Spleen (tissue), 13 donors: ENCODE measurements at regions of chr3 and their contacts with region 1.

Region 1: DNA sequence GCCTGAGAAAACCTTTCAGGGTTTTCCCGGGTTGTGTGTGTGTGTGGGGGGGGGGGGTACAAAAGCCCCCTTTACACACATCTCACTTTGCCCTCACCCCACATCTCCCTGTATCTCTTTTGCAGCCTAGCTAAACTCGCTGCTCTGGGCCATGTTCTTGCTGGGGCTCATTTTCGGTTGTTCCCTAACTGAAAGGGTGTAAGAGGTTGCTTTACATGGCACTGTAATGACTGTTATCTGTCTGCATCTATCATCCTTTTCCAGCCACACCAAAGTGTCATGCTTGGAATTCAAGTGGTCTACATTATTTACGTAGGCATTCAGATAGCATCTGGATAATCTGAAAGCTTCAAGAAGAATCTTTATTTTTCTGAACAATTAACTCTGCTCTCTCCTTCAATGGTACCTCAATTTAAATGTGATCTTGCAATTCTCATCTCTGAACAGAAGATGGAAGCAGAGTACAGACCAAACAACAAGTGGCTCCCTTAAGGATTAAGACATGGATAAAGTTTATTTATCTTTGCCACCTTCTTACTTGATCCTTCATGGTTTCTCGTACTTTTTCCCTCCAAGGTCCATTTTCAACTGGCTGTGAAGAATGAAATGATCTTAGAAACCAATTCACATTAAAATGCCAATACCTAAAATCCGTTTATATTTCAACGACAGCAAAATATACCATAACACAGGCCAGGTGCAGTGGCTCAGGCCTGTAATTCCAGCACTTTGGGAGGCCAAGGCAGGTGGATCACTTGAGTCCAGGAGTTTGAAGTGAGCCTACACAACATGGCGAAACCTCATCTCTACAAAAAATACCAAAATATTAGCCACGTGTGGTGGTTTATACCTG is 34.9 kb downstream of the DCLK3 start:
- DNase-seq: no peak
- H3K4me3 ChIP-seq: no peak overlapping the region
- H3K27ac ChIP-seq: no peak overlapping the region
- H3K4me1 ChIP-seq: peaks cover 0 to 4% (median 0%) of the 10 kb centered on the region in 6 donors
- H3K27me3 ChIP-seq: peaks cover 0 to 6% (median 0%) of the 10 kb centered on the region in 7 donors
- CTCF ChIP-seq: peak; percentile 16 to 70 (median 51)
- POLR2A ChIP-seq: no peak

Region 2: GRCh38 chr3:36868614-36869436 is 139.4 kb after region 1 on chr3:
- intact Hi-C with region 1: loop called (anchors 5 kb)
- DNase-seq: no peak
- H3K4me3 ChIP-seq: no peak overlapping the region
- H3K27ac ChIP-seq: no peak overlapping the region
- H3K4me1 ChIP-seq: peaks cover 0 to 29% (median 9%) of the 10 kb centered on the region in 6 donors
- H3K27me3 ChIP-seq: no peaks in the 10 kb centered on the region
- CTCF ChIP-seq: peak; percentile 20 to 85 (median 70)
- POLR2A ChIP-seq: no peak

Region 3: DNA sequence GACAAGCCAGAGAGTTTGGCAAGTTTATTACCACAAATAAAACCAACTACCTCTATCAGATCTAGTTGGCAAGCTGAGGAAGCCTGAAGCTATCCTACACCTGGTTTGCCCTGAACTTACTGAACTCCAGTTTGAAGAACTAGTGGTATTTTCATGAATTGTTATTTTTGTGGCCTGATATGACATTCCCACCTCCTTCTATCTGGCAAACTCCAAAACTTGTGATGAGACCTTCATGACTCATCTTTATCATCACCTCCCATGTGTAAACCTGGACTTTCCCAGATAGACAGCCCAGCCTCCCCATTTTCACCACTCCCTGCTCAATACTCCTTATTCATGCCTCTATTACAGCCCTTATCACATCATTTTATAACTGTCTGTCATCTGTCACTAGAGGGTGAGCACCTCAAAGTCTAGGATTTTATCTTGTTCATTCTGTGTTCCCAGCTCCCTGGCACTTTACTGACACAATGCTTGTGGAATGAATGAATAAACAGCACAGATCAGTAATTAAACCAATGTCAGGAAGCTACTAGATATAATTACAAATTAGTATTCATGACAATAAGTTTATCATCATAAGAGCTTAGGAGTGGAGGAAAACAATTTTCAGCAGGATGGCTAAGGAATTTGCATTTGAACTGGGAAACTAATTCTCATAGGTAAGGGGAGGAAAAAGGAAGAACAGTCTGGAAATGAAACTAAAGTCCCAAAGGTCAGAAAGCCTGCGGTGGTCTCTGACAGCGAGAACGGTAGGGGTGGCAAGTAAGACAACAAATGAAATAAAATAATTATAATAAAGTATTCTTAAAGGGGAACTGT is 228.6 kb after region 1 on chr3:
- intact Hi-C with region 1: loop called (anchors 5 kb)
- DNase-seq: no peak
- H3K4me3 ChIP-seq: no peak overlapping the region
- H3K27ac ChIP-seq: no peak overlapping the region
- H3K4me1 ChIP-seq: peaks cover 0 to 16% (median 4%) of the 10 kb centered on the region in 6 donors
- H3K27me3 ChIP-seq: no peaks in the 10 kb centered on the region
- CTCF ChIP-seq: no peak
- POLR2A ChIP-seq: no peak

Region 4: GRCh38 chr3:37210230-37210629 is 480.8 kb after region 1 on chr3:
- intact Hi-C with region 1: loop called (anchors 10 kb)
- DNase-seq: no peak
- H3K4me3 ChIP-seq: no peak overlapping the region
- H3K27ac ChIP-seq: no peak overlapping the region
- H3K4me1 ChIP-seq: peaks cover 0 to 10% (median 4%) of the 10 kb centered on the region in 6 donors
- H3K27me3 ChIP-seq: no peaks in the 10 kb centered on the region
- CTCF ChIP-seq: no peak
- POLR2A ChIP-seq: no peak